Heart left ventricle (tissue), 16 donors: ENCODE measurements at regions of chr7 and their contacts with region 1.

Region 1: GRCh38 chr7:94295850-94296249 is 98.8 kb upstream of the COL1A2 start:
- DNase-seq: no peak
- ATAC-seq: peak; percentile 64 to 75 (median 70)
- H3K4me3 ChIP-seq: peak overlapping the region in 7 of 12 donors; percentile 5 to 50 (median 21)
- H3K27ac ChIP-seq: peak overlapping the region; percentile 25 to 81 (median 61)
- H3K4me1 ChIP-seq: peaks cover 0 to 34% (median 6%) of the 10 kb centered on the region in 12 donors
- H3K27me3 ChIP-seq: no peaks in the 10 kb centered on the region
- CTCF ChIP-seq: peak; percentile 24 to 67 (median 48)
- POLR2A ChIP-seq: no peak

Region 2: GRCh38 chr7:94087664-94088352 is 208.0 kb before region 1 on chr7:
- intact Hi-C with region 1: no loop called
- DNase-seq: peak in 2 of 5 donors; percentile 29 to 32
- ATAC-seq: peak; percentile 47 to 76 (median 67)
- H3K4me3 ChIP-seq: peak overlapping the region in 9 of 12 donors; percentile 15 to 47 (median 22)
- H3K27ac ChIP-seq: no peak overlapping the region
- H3K4me1 ChIP-seq: peaks cover 0 to 10% (median 0%) of the 10 kb centered on the region in 12 donors
- H3K27me3 ChIP-seq: peaks cover 0 to 5% (median 0%) of the 10 kb centered on the region in 9 donors
- CTCF ChIP-seq: peak; percentile 63 to 87 (median 78)
- POLR2A ChIP-seq: no peak

Region 3: DNA sequence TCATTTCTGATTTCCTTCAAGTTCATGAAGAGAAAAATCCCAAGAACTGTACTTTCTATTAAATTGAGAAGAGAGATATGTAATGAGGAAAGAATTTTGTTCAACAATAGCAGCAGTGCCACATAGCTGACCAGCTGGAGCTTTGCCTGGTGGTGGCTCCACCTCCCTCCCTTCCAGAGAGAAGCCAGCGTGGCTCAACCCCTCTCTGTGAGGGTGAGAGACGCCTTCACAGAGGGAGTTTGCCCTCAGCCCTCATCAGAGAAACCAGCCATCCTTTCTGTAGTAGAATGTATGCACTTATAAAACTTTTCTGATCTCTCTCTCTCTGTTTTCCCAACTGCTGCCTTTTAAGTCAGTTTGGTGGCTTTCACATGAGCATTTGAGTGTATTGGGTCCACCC is 78.4 kb after region 1 on chr7:
- intact Hi-C with region 1: loop called in 5 of 10 experiments (anchors 1 to 10 kb)
- DNase-seq: peak; percentile 71 to 80 (median 75)
- ATAC-seq: peak; percentile 67 to 92 (median 90)
- H3K4me3 ChIP-seq: peak overlapping the region in 8 of 12 donors; percentile 11 to 47 (median 28)
- H3K27ac ChIP-seq: peak overlapping the region; percentile 72 to 99 (median 84)
- H3K4me1 ChIP-seq: peaks cover 0 to 28% (median 4%) of the 10 kb centered on the region in 12 donors
- H3K27me3 ChIP-seq: no peaks in the 10 kb centered on the region
- CTCF ChIP-seq: no peak
- POLR2A ChIP-seq: peak in 1 of 2 donors; percentile 33

Region 4: DNA sequence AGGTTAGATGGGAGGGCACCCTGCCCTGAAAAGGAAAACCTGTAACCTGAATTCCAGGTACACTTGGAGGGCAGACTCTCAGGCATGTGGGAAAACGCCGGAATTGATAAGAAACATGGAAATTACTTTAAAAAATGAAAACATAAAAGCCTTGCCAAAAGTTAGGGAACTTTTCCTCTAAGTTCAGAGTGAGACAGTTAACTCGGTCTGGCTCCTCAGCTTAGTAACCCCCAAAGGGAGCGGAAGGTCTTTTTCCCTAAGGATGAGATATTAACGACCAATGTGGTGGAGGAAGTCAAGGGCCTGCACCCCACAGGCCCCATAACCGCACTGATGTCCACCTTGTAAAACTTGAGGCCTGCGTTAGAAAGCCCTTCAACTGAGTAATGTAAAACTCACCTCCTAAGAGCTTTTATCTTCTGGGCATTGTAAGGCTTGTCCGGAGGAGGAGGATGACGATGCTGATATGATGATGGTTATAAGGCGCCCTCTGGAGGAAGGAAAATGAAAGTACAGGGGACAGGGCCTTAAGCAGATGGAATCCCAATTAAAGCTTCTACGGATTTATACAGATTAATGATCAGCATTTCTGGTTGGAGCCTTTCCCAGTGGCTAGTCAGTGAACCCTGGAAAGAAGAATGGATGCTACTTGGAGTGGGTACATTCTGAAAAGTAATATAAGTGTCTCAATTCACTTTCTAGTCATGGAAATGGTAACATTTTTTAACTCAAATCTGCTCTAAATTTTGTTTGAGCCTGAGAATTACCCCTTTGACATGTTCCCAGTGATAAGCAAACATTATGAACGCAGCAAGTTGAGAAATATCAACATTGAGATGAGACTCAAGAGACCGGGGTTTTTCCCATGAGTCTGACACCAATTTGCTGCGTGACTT is 99.5 kb after region 1 on chr7:
- intact Hi-C with region 1: loop called in 7 of 10 experiments (anchors 1 to 10 kb)
- DNase-seq: peak in 3 of 5 donors; percentile 41 to 48 (median 41)
- ATAC-seq: peak; percentile 56 to 78 (median 70)
- H3K4me3 ChIP-seq: peak overlapping the region; percentile 26 to 68 (median 61)
- H3K27ac ChIP-seq: peak overlapping the region; percentile 68 to 92 (median 84)
- H3K4me1 ChIP-seq: peaks cover 0 to 35% (median 10%) of the 10 kb centered on the region in 12 donors
- H3K27me3 ChIP-seq: peaks cover 0 to 11% (median 2%) of the 10 kb centered on the region in 9 donors
- CTCF ChIP-seq: peak; percentile 58 to 85 (median 74)
- POLR2A ChIP-seq: no peak

Region 5: GRCh38 chr7:94436018-94436604 is 140.3 kb after region 1 on chr7:
- intact Hi-C with region 1: loop called in 4 of 10 experiments (anchors 2 to 5 kb)
- DNase-seq: peak in 4 of 5 donors; percentile 56 to 65 (median 62)
- ATAC-seq: peak; percentile 65 to 77 (median 72)
- H3K4me3 ChIP-seq: no peak overlapping the region
- H3K27ac ChIP-seq: no peak overlapping the region
- H3K4me1 ChIP-seq: peaks cover 0 to 13% (median 0%) of the 10 kb centered on the region in 12 donors
- H3K27me3 ChIP-seq: peaks cover 0 to 7% (median 0%) of the 10 kb centered on the region in 9 donors
- CTCF ChIP-seq: peak; percentile 66 to 88 (median 77)
- POLR2A ChIP-seq: no peak

Region 6: DNA sequence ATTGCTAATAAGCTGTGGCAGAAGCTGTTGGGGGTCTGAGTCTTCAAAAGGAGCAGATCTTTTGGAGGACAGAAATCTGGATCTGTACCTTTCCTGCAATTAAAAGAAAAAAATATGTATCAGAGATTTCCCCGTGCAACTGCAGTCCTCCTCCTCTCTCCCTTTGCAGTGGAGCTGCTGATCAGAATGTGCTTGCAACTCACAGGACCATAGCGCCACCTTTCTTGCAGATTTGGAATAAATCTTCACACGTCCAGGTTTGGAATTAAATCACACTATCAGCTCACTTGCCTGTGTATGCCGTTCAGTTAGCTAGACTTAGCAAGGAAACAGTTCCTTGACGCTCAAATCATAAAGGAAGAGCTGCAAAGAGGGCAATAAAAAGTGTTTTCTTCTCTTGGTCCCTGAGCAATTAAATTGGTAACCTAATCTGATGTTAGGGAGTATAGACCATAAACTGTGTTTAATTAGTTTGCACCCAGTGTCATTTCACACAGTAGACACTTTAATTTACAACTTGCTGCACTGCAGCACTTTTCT is 951.1 kb after region 1 on chr7:
- intact Hi-C with region 1: loop called in 1 of 10 experiments (anchors 10 kb)
- DNase-seq: peak in 4 of 5 donors; percentile 25 to 32 (median 29)
- ATAC-seq: peak; percentile 55 to 85 (median 73)
- H3K4me3 ChIP-seq: peak overlapping the region in 4 of 12 donors; percentile 9 to 22 (median 22)
- H3K27ac ChIP-seq: no peak overlapping the region
- H3K4me1 ChIP-seq: peaks cover 0 to 6% (median 0%) of the 10 kb centered on the region in 12 donors
- H3K27me3 ChIP-seq: no peaks in the 10 kb centered on the region
- CTCF ChIP-seq: peak; percentile 36 to 76 (median 62)
- POLR2A ChIP-seq: no peak

Region 7: DNA sequence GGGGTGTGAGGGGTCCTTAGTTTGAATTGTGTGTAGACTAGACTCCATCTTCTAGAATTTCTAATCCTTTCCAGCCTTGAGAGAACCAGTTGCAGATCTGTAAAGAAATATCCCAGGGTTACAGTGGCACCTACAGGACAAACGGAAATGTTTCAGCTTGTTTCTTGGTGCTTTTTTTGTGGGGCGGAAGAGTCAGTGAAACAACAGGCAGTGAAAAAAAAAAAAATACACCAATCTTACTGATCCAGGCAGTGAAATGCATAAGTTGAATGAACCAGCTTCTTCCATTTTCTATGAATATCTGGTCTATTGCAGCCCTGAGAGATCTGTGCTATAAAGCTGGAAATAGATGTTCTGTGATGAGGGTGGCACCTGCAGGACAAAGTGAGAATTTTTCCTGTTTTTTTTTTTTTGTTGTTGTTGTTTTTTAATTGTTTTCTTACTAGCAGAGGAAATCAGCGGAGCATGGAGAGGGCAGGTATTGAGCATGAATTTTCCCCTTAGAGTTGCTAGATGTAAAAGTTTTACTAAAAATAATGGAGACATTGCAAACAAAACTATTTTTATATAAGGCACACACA is 1394.6 kb after region 1 on chr7:
- intact Hi-C with region 1: loop called in 1 of 10 experiments (anchors 10 kb)
- DNase-seq: peak in 2 of 5 donors; percentile 11 to 18
- ATAC-seq: peak; percentile 26 to 64 (median 56)
- H3K4me3 ChIP-seq: peak overlapping the region in 2 of 12 donors; percentile 11 to 42
- H3K27ac ChIP-seq: no peak overlapping the region
- H3K4me1 ChIP-seq: peaks cover 0 to 7% (median 0%) of the 10 kb centered on the region in 12 donors
- H3K27me3 ChIP-seq: no peaks in the 10 kb centered on the region
- CTCF ChIP-seq: peak; percentile 39 to 76 (median 64)
- POLR2A ChIP-seq: no peak